GM12878 (cell line): ENCODE measurements at regions of chr3 and their contacts with region 1.

Region 1: GRCh38 chr3:98573181-98573728 is 20.2 kb downstream of the CPOX start:
- DNase-seq: no peak
- ATAC-seq: peak; percentile 85
- H3K4me3 ChIP-seq: peak overlapping the region; percentile 42; the same call in 1 of the 2 replicates
- H3K27ac ChIP-seq: peak overlapping the region; percentile 79
- H3K4me1 ChIP-seq: peaks cover 15% of the 10 kb centered on the region
- H3K27me3 ChIP-seq: no peaks in the 10 kb centered on the region
- CTCF ChIP-seq: peak; percentile 42 to 53 (median 53); a peak in 5 of 6 replicates
- EP300 ChIP-seq: no peak
- POLR2A ChIP-seq: no peak
- RAD21 ChIP-seq: peak; percentile 92

Region 2: GRCh38 chr3:98343647-98344507 is 229.4 kb before region 1 on chr3:
- CTCF ChIA-PET with region 1: interaction called, 14 read pairs
- POLR2A ChIA-PET with region 1: no interaction called
- RAD21 ChIA-PET with region 1: interaction called, 10 read pairs
- SMC1A ChIA-PET with region 1: interaction called, 8 read pairs
- in situ Hi-C with region 1: no loop called
- intact Hi-C with region 1: loop called (anchors 5 kb)
- DNase-seq: no peak
- ATAC-seq: peak; percentile 92
- H3K4me3 ChIP-seq: no peak overlapping the region
- H3K27ac ChIP-seq: no peak overlapping the region
- H3K4me1 ChIP-seq: no peaks in the 10 kb centered on the region
- H3K27me3 ChIP-seq: no peaks in the 10 kb centered on the region
- CTCF ChIP-seq: peak; percentile 70 to 84 (median 80)
- EP300 ChIP-seq: no peak
- POLR2A ChIP-seq: no peak
- RAD21 ChIP-seq: peak; percentile 67

Region 3: DNA sequence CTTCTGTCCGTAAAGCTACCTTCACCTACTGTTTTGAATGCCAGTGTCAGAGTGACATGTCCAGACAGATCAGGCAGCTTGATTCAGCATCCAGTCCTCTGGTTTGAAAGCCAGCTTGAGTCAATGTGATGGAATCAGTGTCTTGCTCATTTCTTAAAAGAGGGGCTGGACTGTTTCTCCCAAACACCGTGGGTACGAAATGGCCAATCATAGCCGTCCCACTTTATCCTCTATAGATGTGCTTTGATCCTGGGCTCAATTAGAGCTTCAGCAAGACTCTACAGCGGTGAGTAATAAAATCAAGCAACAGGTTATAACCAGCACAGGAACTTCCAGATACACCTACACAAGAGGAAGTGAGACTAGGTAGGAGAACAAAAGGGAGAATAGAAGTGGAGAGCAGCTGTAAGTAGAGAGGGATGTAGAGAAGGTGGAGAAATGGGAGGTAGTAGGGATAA is 127.3 kb before region 1 on chr3:
- CTCF ChIA-PET with region 1: interaction called, 4 read pairs
- POLR2A ChIA-PET with region 1: no interaction called
- RAD21 ChIA-PET with region 1: interaction called, 6 read pairs
- SMC1A ChIA-PET with region 1: interaction called, 3 read pairs
- in situ Hi-C with region 1: loop called (anchors 5 kb)
- intact Hi-C with region 1: loop called (anchors 5 kb)
- DNase-seq: peak; percentile 48
- ATAC-seq: peak; percentile 87
- H3K4me3 ChIP-seq: no peak overlapping the region
- H3K27ac ChIP-seq: peak overlapping the region; percentile 71
- H3K4me1 ChIP-seq: peaks cover 14% of the 10 kb centered on the region; the same call in 1 of the 2 replicates
- H3K27me3 ChIP-seq: no peaks in the 10 kb centered on the region
- CTCF ChIP-seq: no peak
- EP300 ChIP-seq: peak in 1 of 2 experiments; percentile 70; a peak in 2 of 4 replicates
- POLR2A ChIP-seq: no peak
- RAD21 ChIP-seq: no peak

Region 4: DNA sequence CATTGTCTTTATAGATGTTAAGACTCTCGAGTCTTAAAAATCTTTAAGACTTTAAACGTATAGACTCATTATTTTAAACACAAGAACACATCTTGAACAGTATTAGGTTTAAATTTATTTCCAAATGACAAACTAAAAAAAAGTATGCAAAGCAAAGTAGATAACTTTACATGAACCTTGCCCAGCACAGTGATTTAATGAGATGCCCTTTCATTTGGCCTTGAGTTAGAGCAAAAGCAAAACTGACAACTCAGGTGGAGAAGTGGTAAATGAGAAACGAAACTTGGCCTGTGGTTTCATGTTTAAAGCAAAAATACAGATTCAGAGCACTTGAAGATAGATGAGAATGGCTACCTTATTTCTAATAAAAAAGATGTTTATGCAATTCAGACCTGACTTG is 32.9 kb before region 1 on chr3:
- CTCF ChIA-PET with region 1: interaction called, 40 read pairs
- POLR2A ChIA-PET with region 1: interaction called, 6 read pairs
- RAD21 ChIA-PET with region 1: interaction called, 511 read pairs
- SMC1A ChIA-PET with region 1: interaction called, 230 read pairs
- in situ Hi-C with region 1: no loop called
- intact Hi-C with region 1: no loop called
- DNase-seq: peak; percentile 92
- ATAC-seq: peak; percentile 39
- H3K4me3 ChIP-seq: peak overlapping the region; percentile 42; the same call in 1 of the 2 replicates
- H3K27ac ChIP-seq: peak overlapping the region; percentile 51
- H3K4me1 ChIP-seq: peaks cover 32% of the 10 kb centered on the region; the same call in 1 of the 2 replicates
- H3K27me3 ChIP-seq: no peaks in the 10 kb centered on the region
- CTCF ChIP-seq: no peak
- EP300 ChIP-seq: peak; percentile 74 to 92; a peak in 3 of 4 replicates
- POLR2A ChIP-seq: no peak
- RAD21 ChIP-seq: no peak

Region 5: DNA sequence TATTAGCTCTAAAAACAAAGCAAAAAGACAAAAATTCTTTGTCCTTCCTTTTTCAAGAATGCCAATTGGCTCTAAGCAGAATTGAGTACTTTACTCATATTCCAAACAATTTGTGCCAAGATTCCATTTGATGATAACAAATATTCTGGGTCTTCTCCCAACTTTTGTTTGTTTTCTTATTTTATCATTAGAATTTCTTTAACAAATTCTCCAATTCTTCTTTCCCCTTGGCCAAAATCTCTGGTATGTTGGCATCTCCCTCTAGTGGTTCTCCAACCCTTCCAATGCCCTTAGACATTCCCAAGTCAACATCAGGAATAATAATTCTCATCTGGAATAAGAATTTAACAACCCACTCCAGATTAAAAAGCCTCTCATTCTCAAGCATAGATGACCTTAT is 14.8 kb after region 1 on chr3:
- CTCF ChIA-PET with region 1: interaction called, 10 read pairs
- POLR2A ChIA-PET with region 1: interaction called, 5 read pairs
- RAD21 ChIA-PET with region 1: interaction called, 8 read pairs
- SMC1A ChIA-PET with region 1: interaction called, 74 read pairs
- in situ Hi-C with region 1: no loop called
- intact Hi-C with region 1: no loop called
- DNase-seq: no peak
- ATAC-seq: no peak
- H3K4me3 ChIP-seq: no peak overlapping the region
- H3K27ac ChIP-seq: no peak overlapping the region
- H3K4me1 ChIP-seq: no peaks in the 10 kb centered on the region
- H3K27me3 ChIP-seq: no peaks in the 10 kb centered on the region
- CTCF ChIP-seq: peak in 1 of 3 experiments; percentile 18; a peak in 2 of 6 replicates
- EP300 ChIP-seq: no peak
- POLR2A ChIP-seq: no peak
- RAD21 ChIP-seq: no peak

Region 6: GRCh38 chr3:98630416-98630815 is 57.2 kb after region 1 on chr3:
- CTCF ChIA-PET with region 1: no interaction called
- POLR2A ChIA-PET with region 1: no interaction called
- RAD21 ChIA-PET with region 1: no interaction called
- SMC1A ChIA-PET with region 1: no interaction called
- in situ Hi-C with region 1: no loop called
- intact Hi-C with region 1: no loop called
- DNase-seq: no peak
- ATAC-seq: no peak
- H3K4me3 ChIP-seq: no peak overlapping the region
- H3K27ac ChIP-seq: no peak overlapping the region
- H3K4me1 ChIP-seq: no peaks in the 10 kb centered on the region
- H3K27me3 ChIP-seq: no peaks in the 10 kb centered on the region
- CTCF ChIP-seq: no peak
- EP300 ChIP-seq: no peak
- POLR2A ChIP-seq: no peak
- RAD21 ChIP-seq: no peak